ENCODE measurements at regions of chr7 and their contacts with region 1.

Region 1: DNA sequence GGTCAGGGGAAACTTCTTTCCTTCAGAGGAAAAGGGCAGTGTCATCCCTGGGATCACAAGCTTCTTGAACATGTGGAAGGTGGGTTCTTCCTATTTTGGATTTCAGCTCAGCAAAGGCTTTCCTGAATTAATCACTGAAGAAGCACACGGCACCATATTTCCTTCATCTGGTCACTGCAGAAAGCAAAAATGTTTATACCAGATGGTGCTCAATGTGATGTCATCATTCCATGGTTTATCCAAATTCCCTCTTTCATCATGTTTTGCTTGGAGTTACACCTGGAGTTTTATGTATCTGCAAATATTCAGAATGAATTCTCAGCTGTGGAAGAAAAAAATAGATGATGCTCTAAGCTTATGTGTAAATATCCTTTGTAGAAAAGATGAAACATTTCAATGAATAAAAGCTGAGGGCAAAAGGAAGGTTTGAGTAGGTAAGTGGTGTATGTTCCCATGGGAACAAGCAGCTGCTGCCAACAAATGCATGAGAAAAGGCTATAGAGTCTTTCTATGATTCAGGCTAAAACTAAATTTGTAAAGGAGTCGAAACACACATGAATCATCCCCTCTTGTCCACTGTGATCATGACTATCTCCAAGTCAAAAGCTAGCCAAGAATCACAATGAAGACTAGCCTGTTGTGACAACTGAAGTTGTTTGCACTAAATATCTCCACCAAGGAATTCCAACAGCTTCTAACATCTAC is 26.9 kb upstream of the BPGM start:
- DNase-seq: no peak
- H3K4me3 ChIP-seq: no peak overlapping the region
- H3K27ac ChIP-seq: no peak overlapping the region
- H3K4me1 ChIP-seq: no peaks in the 10 kb centered on the region
- H3K27me3 ChIP-seq: no peaks in the 10 kb centered on the region; a peak in 1 of 7 replicates
- CTCF ChIP-seq: no peak
- EP300 ChIP-seq: no peak
- POLR2A ChIP-seq: no peak
- RAD21 ChIP-seq: no peak

Region 2: DNA sequence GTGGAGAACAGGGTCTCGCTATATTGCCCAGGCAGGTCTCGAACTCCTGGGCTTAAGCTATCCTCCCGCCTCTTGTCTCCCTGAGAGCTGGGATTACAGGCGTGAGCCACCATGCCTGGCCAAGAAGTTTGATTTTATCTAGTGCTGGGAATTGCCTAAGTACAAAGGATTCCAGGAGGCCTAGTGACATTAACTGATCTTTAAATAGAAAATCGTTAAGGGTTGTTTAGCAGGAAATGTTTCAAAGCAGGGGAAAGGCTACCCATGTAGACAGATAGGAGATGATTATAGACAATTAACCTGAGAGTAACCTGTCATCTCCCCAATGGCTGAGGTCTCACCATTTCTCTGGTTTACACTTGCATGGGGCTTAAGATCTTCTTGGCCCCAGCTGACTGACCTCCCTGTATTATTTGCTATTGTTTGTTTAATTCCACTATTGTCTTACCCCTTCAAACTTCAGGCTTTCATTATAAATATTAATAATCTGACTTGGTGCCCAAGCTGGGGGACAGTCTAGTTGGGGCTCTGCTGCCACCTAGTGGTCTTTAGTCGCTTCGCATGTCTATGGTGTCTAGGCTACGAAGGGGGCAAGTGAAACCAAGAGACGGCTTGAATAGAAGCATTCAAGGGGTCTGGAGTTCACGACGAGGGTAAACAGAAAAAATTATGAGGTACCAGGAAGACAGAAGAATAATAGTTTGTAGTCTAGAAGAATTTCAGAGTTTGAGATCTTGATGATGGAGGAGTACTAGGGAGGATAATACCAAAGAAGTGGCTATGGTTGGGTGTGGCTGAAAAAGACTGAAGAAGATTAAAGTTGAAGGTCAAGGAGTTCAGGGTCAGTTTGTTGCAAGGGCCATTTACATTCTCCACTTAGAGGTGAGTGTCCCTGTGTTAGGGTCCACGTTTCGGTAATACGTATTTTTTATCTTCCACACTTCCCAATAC is 13.5 kb before region 1 on chr7:
- CTCF ChIA-PET with region 1: interaction called, 20 read pairs
- POLR2A ChIA-PET with region 1: no interaction called
- DNase-seq: peak in 1 of 2 experiments; percentile 68
- H3K4me3 ChIP-seq: no peak overlapping the region
- H3K27ac ChIP-seq: no peak overlapping the region
- H3K4me1 ChIP-seq: no peaks in the 10 kb centered on the region
- H3K27me3 ChIP-seq: peaks cover 0 to 3% (median under 1%) of the 10 kb centered on the region in 4 experiments; a peak in 3 of 7 replicates
- CTCF ChIP-seq: peak; percentile 69 to 79 (median 70)
- EP300 ChIP-seq: no peak
- POLR2A ChIP-seq: no peak
- RAD21 ChIP-seq: peak; percentile 84 to 87

Measured in H1 (cell line).